ENCODE measurements at regions of chr9 and their contacts with region 1.

Region 1: DNA sequence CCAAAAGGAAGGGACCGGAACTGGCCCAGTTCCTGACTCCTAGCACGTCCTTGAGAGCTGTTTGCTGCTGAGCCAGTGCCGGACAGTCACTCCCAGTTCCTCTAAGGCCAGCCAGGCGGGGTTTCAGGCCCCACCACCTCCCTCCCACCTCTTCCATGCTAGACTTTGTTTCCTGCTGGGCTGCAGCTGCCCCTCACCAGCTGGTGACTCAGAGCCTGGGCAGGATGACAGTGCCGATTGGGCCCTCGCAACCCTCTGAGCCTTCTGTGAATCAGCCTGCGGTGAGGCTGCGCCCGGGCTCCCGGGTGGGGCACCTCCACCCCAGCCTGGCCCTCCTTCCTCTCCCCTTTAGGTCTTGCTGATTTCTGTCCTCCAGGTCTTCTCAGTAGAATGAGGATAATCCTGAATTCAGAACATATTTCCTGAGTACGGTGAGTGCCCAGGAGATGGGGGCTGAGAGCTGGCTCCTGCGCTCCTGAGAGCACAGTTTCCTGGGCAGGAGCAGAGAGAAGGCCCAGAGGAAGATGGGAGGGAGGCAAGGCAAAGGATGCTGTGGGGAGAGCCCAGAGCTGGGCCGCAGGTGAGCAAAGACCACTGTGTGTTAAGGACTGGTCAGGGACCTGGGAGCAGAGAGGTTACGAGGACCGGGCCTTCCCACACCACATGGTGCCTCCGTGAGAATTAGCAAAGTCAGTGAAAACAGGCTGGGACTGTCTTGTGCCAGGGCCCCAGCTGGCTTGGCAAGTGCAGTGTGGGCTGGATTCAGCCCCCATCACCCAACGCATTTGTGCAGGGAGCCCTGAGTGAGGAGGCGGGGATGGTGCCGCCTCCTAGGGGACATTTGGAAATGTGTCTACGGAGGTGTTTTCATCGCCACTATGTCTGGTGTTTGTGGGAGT is 32.9 kb upstream of the STXBP1 start:
- DNase-seq: peak; percentile 97 to 98
- H3K4me3 ChIP-seq: peak overlapping the region; percentile 57
- H3K27ac ChIP-seq: peak overlapping the region; percentile 96
- H3K4me1 ChIP-seq: peaks cover 57% of the 10 kb centered on the region
- H3K27me3 ChIP-seq: no peaks in the 10 kb centered on the region
- CTCF ChIP-seq: peak; percentile 50

Region 2: DNA sequence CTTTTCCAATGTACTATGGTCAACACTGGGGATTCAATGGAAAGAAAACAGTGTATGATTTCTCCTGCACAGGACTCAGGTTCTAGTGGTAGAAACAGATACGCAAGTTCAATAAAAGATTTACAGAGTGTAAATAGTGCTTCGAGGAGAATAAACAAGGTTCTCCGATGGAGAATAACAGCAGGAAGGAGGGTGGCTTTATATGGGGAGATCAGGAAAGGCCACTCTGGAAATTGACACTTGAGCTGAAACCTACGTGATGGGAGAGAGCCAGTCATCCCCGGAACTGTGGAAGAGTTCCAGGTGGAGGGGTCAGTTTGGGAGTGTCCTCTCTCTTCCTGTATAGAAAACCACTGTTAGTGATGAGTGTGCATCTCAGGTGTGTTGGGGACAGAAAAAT is 248.7 kb before region 1 on chr9:
- CTCF ChIA-PET with region 1: no interaction called
- POLR2A ChIA-PET with region 1: no interaction called
- intact Hi-C with region 1: no loop called
- DNase-seq: no peak
- H3K4me3 ChIP-seq: no peak overlapping the region
- H3K27ac ChIP-seq: no peak overlapping the region
- H3K4me1 ChIP-seq: peaks cover 28% of the 10 kb centered on the region
- H3K27me3 ChIP-seq: no peaks in the 10 kb centered on the region
- CTCF ChIP-seq: no peak

Region 3: DNA sequence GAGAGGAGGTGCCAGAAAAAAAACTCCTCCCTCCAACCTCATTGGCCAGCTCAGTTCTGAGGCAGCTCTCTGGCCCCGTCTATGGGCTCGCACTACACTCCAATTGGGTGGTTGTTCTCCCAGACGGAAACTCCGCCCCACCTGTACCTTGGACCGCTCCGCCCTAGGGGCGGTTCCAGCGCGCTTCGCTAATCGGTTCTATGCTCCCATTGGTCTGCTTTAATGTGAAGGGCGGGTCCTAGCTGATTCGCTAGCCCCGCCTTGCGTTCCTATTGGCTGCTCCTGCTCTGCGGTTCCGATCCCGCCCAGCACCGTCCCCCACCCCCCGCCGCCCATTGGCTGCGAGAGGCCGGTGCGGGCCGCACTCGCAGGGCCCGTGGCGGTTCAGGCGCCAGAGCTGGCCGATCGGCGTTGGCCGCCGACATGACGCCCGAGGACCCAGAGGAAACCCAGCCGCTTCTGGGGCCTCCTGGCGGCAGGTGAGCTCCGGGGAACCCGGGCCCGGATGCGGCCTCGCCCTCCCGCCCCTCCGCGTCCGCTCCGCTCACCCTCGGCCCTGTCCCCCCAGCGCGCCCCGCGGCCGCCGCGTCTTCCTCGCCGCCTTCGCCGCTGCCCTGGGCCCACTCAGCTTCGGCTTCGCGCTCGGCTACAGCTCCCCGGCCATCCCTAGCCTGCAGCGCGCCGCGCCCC is 182.3 kb before region 1 on chr9 and contains the start of gene SLC2A8:
- CTCF ChIA-PET with region 1: interaction called, 5 read pairs
- POLR2A ChIA-PET with region 1: no interaction called
- intact Hi-C with region 1: loop called (anchors 10 kb)
- DNase-seq: peak; percentile 98 to 100
- H3K4me3 ChIP-seq: peak within 1 kb of the TSS; percentile 68
- H3K27ac ChIP-seq: no peak within 1 kb of the TSS
- H3K4me1 ChIP-seq: no peaks in the 10 kb centered on the region; the same call in 1 of the 2 replicates
- H3K27me3 ChIP-seq: no peaks in the 10 kb centered on the region
- CTCF ChIP-seq: 0 out of 2 replicates have a peak, but pooled peaks have one; percentile 12
- total RNA-seq, gene SLC2A8: 19.1 and 24.6 TPM in 2 replicates

Region 4: DNA sequence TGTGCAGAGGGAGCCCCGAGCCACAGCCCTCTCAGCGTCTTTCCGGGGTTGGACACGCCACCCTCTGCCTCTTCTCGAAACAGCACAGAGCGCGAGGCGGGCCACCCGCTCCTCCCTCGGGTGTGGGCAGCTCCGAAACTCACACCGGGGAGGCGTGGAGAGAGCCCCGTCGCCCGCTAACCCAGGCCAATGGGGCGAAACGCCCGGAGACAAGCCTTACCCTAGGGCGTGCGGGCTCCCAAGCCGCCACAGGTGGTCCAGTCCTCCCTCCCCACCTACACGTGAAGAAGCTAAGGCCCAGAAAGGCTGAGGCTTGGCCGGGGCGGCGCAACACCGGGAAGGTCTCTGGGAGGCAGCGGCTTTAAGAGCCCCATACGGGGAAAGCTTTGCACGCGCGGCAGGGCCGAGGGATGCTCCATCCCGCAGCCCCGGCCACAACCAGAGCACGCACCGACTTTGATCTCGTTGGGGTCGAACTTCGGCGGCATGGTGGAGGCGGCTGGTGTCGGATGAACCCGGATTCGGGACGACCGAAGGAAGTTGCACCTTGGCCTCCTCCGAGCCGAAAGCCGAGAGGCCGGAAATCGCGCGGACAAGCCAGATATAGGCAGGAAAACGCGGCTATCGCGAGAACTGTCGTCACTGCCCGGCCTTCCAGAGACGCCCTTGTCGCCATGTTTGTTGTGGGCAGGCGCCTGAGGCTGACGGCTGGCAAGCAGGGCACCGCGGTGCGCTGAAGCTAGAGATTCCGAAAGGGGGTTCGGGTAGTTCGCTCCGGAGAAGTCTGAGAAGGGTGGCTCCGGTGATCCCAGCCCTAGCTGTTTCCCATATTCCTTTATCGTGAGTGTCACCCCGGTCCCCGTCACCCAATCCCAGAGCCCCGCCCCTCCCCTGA is 128.1 kb before region 1 on chr9 and contains the starts of genes LRSAM1 and RPL12:
- CTCF ChIA-PET with region 1: no interaction called
- POLR2A ChIA-PET with region 1: no interaction called
- intact Hi-C with region 1: loop called (anchors 5 kb)
- DNase-seq: peak; percentile 78 to 97
- H3K4me3 ChIP-seq: peak within 1 kb of the TSS; percentile 99
- H3K27ac ChIP-seq: peak within 1 kb of the TSS; percentile 95
- H3K4me1 ChIP-seq: peaks cover 23% of the 10 kb centered on the region
- H3K27me3 ChIP-seq: no peaks in the 10 kb centered on the region
- CTCF ChIP-seq: no peak
- total RNA-seq, gene LRSAM1: 44.0 and 63.9 TPM in 2 replicates
- total RNA-seq, gene RPL12: 1,648 and 1,717 TPM in 2 replicates

Region 5: GRCh38 chr9:127545196-127546124 is 33.7 kb before region 1 on chr9:
- CTCF ChIA-PET with region 1: interaction called, 5 read pairs
- POLR2A ChIA-PET with region 1: no interaction called
- intact Hi-C with region 1: loop called (anchors 1 kb)
- DNase-seq: peak; percentile 96 to 97
- H3K4me3 ChIP-seq: peak overlapping the region; percentile 46; the same call in 1 of the 2 replicates
- H3K27ac ChIP-seq: peak overlapping the region; percentile 90
- H3K4me1 ChIP-seq: peaks cover 72% of the 10 kb centered on the region
- H3K27me3 ChIP-seq: no peaks in the 10 kb centered on the region
- CTCF ChIP-seq: 0 out of 2 replicates have a peak, but pooled peaks have one; percentile 23

Region 6: GRCh38 chr9:127555768-127556397 is 23.3 kb before region 1 on chr9:
- CTCF ChIA-PET with region 1: interaction called, 5 read pairs
- POLR2A ChIA-PET with region 1: interaction called, 17 read pairs
- intact Hi-C with region 1: loop called (anchors 1 kb)
- DNase-seq: peak; percentile 94
- H3K4me3 ChIP-seq: no peak overlapping the region
- H3K27ac ChIP-seq: peak overlapping the region; percentile 74
- H3K4me1 ChIP-seq: peaks cover 69% of the 10 kb centered on the region
- H3K27me3 ChIP-seq: no peaks in the 10 kb centered on the region
- CTCF ChIP-seq: no peak

Region 7: DNA sequence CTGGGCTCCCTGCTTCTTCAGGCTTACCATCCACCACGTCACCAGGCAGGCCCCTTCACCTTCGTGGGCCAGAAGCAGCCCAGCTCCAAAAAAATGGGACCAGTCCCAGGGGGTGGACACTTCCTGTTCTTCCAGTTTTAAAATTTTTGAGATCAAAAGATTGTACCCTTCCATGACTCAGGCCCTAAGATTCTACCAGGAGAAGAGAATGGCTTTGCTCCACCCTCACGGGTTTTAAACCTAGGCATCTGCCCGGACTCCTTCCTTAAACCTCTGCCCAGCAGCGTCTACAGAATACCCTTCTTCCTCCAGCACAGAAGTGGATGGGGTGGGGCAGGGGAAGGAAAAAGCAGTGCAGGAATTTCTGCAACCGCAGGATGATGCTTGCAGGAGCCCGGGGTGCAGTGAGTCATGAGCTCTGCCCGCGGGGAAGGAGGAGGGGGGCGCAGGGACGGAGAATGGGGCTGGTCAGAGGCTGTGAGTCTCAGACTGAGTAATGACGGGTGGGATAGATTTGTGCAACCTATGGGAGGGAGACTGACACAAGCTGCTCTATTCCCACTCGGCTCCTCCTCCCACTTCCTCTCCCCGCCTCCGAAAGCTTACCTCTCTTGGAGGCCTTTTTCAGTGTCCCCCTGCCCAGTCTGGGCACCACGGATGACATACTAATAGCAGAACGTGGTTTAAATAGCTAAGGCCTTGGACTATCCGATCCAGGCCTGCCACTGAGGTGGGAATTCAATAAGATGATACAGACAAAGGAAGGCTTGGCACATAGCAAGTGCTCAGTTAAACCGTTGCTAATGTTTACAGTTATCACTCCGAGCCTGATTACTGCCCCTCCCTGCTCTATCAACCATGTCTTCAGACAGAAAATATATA is 17.3 kb before region 1 on chr9:
- CTCF ChIA-PET with region 1: interaction called, 12 read pairs
- POLR2A ChIA-PET with region 1: interaction called, 8 read pairs
- intact Hi-C with region 1: loop called (anchors 1 kb)
- DNase-seq: peak; percentile 99 to 100
- H3K4me3 ChIP-seq: peak overlapping the region; percentile 8; the same call in 1 of the 2 replicates
- H3K27ac ChIP-seq: peak overlapping the region; percentile 86
- H3K4me1 ChIP-seq: peaks cover 95% of the 10 kb centered on the region
- H3K27me3 ChIP-seq: no peaks in the 10 kb centered on the region
- CTCF ChIP-seq: no peak

Region 8: GRCh38 chr9:128007566-128008138 is 428.4 kb after region 1 on chr9:
- CTCF ChIA-PET with region 1: no interaction called
- POLR2A ChIA-PET with region 1: no interaction called
- intact Hi-C with region 1: loop called (anchors 10 kb)
- DNase-seq: peak; percentile 82 to 98
- H3K4me3 ChIP-seq: no peak overlapping the region
- H3K27ac ChIP-seq: peak overlapping the region; percentile 96
- H3K4me1 ChIP-seq: peaks cover 57% of the 10 kb centered on the region
- H3K27me3 ChIP-seq: no peaks in the 10 kb centered on the region
- CTCF ChIP-seq: no peak

Measured in PC-9 (cell line).